ENCODE measurements at regions of chr7 and their contacts with region 1.

Region 1: DNA sequence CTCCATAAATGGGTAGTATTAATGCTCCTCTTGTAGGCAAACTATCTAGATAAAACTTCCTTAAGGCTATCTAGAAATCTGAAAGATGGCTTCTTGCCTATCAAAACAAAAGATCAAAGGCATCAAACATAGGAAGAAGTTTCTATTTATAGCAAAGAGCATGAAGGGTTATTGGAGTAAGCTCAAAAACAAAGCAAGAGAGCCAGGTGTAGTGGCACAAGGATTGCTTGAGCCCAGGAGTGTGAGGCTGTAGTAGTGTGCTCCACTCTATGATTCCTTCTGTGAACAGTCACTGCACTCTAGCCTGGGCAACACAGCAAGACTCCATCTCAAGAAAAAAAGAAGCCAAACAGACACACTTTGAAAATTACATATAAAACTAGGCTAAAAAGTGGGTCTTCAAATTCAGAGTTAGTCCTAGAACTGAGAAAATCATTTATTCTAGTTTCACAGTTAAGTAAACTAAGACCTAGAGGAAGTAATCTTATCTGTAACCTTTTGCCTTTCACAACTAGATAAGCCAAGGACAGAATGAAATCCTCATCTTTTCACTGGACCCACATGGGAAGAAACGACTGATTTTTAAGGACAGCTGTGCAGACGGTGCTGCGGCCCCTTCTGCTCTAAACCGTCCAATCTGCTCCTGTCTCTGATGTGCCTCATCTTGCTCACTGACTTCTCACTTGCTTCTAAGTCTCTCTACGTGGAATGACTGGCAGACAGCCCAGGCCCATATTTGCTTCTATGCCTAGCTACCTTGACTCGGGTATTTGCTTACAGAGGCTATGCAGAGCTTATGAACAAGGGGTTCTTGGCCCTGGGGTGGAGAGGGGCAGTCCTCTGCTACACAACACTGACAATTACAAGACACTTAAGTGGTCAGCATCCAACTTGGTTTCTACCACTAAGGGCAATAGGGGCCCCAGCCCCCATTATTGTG is 50.0 kb downstream of the ESYT2 start:
- DNase-seq: peak in 2 of 3 donors; percentile 45 to 68
- ATAC-seq: peak; percentile 54
- H3K4me3 ChIP-seq: no peak overlapping the region
- H3K4me1 ChIP-seq: peaks cover 35% of the 10 kb centered on the region
- CTCF ChIP-seq: no peak

Region 2: GRCh38 chr7:158623241-158623640 is 156.1 kb before region 1 on chr7:
- intact Hi-C with region 1: no loop called
- DNase-seq: no peak
- ATAC-seq: no peak
- H3K4me3 ChIP-seq: no peak overlapping the region
- H3K4me1 ChIP-seq: no peaks in the 10 kb centered on the region
- CTCF ChIP-seq: no peak

Region 3: GRCh38 chr7:158829342-158830210 is 50.2 kb after region 1 on chr7 and contains the start of gene ESYT2:
- intact Hi-C with region 1: loop called in 1 of 2 experiments (anchors 5 kb)
- DNase-seq: peak; percentile 99 to 100 (median 99)
- ATAC-seq: peak; percentile 92
- H3K4me3 ChIP-seq: peak within 1 kb of the TSS; percentile 59
- H3K4me1 ChIP-seq: peaks cover 18% of the 10 kb centered on the region
- CTCF ChIP-seq: no peak
- total RNA-seq, gene ESYT2: 66.8 to 89.3 (median 69.0) TPM

Region 4: DNA sequence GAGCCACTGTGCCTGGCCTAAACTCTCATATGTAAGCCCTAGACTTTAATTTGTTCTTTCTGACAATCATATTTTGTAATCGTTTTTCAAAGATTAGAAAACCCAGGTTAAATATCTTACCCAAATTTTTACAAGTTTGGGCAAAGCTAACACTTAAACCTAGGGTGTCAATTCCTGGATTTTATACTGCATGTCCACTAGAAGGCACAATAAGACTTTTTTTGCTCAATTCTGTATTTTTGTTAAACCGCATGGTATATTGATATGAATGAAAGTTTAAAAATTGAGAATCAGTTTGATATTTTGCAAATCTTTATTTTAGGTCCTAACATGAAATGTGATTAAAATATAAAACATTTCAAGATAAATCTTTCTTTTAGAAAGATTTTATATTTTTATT is 106.3 kb after region 1 on chr7:
- intact Hi-C with region 1: no loop called
- DNase-seq: no peak
- ATAC-seq: no peak
- H3K4me3 ChIP-seq: no peak overlapping the region
- H3K4me1 ChIP-seq: no peaks in the 10 kb centered on the region
- CTCF ChIP-seq: no peak

Region 5: DNA sequence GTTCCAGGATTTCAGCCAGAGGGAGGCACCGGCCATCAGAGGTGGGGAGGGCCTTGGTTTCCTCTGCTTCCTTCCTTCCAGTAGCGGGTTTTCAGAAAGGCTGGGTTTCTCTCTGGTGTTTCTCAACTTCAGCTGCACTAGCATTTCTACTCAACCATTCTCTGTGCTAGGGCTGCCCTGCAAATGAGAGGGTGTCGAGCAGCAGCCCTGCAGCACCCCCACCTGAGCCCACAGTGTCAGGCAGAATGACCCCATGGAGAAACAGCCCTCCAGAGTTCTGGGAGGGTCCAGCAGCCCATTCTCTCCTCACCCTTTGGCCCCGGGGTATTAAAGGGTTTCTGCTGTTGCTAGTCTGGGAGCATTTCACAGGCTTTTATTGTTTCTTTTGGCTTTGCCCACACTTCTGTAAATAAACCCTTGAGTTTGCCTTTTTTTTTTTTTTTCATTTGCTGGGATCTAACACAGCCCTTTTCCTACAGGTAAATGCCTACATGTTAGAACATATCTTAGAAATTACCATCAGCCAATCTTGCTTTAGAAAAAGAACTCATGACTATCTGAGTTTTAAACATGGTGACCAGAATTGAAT is 516.9 kb after region 1 on chr7:
- intact Hi-C with region 1: no loop called
- DNase-seq: no peak
- ATAC-seq: no peak
- H3K4me3 ChIP-seq: no peak overlapping the region
- H3K4me1 ChIP-seq: no peaks in the 10 kb centered on the region
- CTCF ChIP-seq: no peak